Activated CD4-positive, alpha-beta memory T cell treated with anti-CD3 and anti-CD28 coated beads for 36 hours (primary cell): ENCODE measurements at regions of chr16 and their contacts with region 1.

Region 1: GRCh38 chr16:88743693-88744576 is 37.6 kb downstream of the CTU2 start:
- DNase-seq: peak; percentile 77
- H3K4me3 Mint-ChIP-seq: no peak overlapping the region
- H3K27ac Mint-ChIP-seq: no peak overlapping the region
- H3K4me1 Mint-ChIP-seq: peaks cover 30% of the 10 kb centered on the region
- H3K27me3 Mint-ChIP-seq: no peaks in the 10 kb centered on the region

Region 2: GRCh38 chr16:88375236-88375975 is 368.5 kb before region 1 on chr16:
- CTCF ChIA-PET with region 1: no interaction called
- POLR2A ChIA-PET with region 1: no interaction called
- intact Hi-C with region 1: no loop called
- DNase-seq: no peak
- H3K4me3 Mint-ChIP-seq: no peak overlapping the region
- H3K27ac Mint-ChIP-seq: no peak overlapping the region
- H3K4me1 Mint-ChIP-seq: no peaks in the 10 kb centered on the region
- H3K27me3 Mint-ChIP-seq: peaks cover 3% of the 10 kb centered on the region

Region 3: DNA sequence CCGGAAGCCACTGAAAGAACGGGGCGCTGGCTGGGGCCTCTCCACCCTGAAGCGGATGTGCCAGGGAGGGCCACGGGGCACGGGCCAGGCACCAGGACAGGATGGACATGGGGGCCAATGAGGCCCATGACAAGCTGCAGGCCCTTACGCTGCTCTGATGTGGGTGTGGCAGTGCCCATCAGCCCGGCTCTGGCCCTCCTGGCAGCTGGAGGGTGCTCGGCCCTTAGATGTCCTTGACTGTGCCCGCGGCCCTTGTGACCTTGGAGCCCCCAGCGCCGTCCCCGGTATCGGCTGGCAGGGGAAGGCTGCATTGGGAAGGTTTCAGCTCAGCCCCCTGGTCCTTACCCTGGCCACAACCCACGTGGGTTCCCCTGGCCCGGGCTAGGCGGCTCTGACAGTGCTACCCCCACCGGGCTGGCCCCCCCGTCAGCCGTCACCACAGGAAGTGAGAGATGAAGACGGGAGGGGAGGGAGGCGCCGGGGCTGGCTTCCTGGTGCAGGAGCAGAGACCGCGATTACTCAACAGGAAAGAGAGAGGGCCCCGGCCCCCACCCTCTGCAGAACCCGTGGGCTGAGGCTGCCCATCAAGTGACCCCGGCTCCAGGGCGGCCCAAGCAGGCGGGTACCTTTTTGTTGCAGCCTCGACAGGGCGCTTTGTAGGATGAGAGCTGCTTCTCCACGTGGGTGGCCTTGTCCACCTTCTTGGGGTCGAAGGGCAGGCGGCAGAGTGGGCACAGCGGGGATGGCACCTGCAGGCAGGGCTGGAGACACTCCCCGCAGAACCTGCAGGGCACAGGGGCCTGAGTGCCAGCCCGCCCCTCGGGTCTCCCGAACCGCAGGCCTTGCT is 43.1 kb before region 1 on chr16:
- CTCF ChIA-PET with region 1: interaction called, 3 read pairs
- POLR2A ChIA-PET with region 1: no interaction called
- intact Hi-C with region 1: loop called (anchors 5 kb)
- DNase-seq: peak; percentile 98
- H3K4me3 Mint-ChIP-seq: peak overlapping the region; percentile 81
- H3K27ac Mint-ChIP-seq: peak overlapping the region; percentile 91
- H3K4me1 Mint-ChIP-seq: peaks cover 64% of the 10 kb centered on the region
- H3K27me3 Mint-ChIP-seq: no peaks in the 10 kb centered on the region

Region 4: GRCh38 chr16:88779406-88780141 is 35.6 kb after region 1 on chr16:
- CTCF ChIA-PET with region 1: interaction called, 118 read pairs
- POLR2A ChIA-PET with region 1: interaction called, 6 read pairs
- intact Hi-C with region 1: loop called (anchors 1 kb)
- DNase-seq: no peak
- H3K4me3 Mint-ChIP-seq: peak overlapping the region; percentile 80
- H3K27ac Mint-ChIP-seq: peak overlapping the region; percentile 94
- H3K4me1 Mint-ChIP-seq: peaks cover 52% of the 10 kb centered on the region
- H3K27me3 Mint-ChIP-seq: no peaks in the 10 kb centered on the region

Region 5: GRCh38 chr16:88790312-88791211 is 46.6 kb after region 1 on chr16:
- CTCF ChIA-PET with region 1: interaction called, 11 read pairs
- POLR2A ChIA-PET with region 1: no interaction called
- intact Hi-C with region 1: no loop called
- DNase-seq: peak; percentile 84
- H3K4me3 Mint-ChIP-seq: peak overlapping the region; percentile 69
- H3K27ac Mint-ChIP-seq: peak overlapping the region; percentile 81
- H3K4me1 Mint-ChIP-seq: peaks cover 52% of the 10 kb centered on the region
- H3K27me3 Mint-ChIP-seq: no peaks in the 10 kb centered on the region

Region 6: GRCh38 chr16:89210904-89211515 is 467.1 kb after region 1 on chr16:
- CTCF ChIA-PET with region 1: no interaction called
- POLR2A ChIA-PET with region 1: no interaction called
- intact Hi-C with region 1: no loop called
- DNase-seq: no peak
- H3K4me3 Mint-ChIP-seq: no peak overlapping the region
- H3K27ac Mint-ChIP-seq: no peak overlapping the region
- H3K4me1 Mint-ChIP-seq: no peaks in the 10 kb centered on the region
- H3K27me3 Mint-ChIP-seq: peaks cover 12% of the 10 kb centered on the region